Dorsolateral prefrontal cortex (tissue), 120 donors: ENCODE measurements at regions of chr4 and their contacts with region 1.

Region 1: GRCh38 chr4:140137671-140138070 is 16.3 kb downstream of the MAML3 start:
- DNase-seq: no peak
- H3K4me3 ChIP-seq: no peak overlapping the region
- H3K27ac ChIP-seq: no peak overlapping the region
- H3K27me3 ChIP-seq: no peaks in the 10 kb centered on the region
- CTCF ChIP-seq: no peak

Region 2: DNA sequence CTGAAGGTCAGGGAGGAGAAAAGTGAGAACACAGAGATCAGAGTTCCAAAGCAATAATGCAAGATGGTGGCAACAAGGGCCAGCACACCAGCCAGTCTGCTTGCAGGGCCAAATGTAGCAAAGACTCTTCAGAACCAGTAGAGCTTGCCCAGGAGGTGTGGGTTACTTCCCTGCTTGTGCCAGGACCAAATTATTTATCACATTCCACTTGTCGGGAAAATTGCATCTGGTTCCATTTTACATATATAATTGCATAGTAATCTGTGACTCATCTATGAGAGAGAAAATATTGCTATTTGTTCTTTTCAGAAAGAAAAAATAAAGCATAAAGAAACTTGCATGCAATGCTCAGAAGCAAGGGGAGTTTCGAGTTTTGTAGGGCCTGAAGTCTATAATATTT is 25.1 kb before region 1 on chr4:
- intact Hi-C with region 1: loop called in 1 of 2 experiments (anchors 2 kb)
- DNase-seq: no peak
- H3K4me3 ChIP-seq: no peak overlapping the region
- H3K27ac ChIP-seq: no peak overlapping the region
- H3K27me3 ChIP-seq: no peaks in the 10 kb centered on the region
- CTCF ChIP-seq: no peak

Region 3: GRCh38 chr4:140326395-140326993 is 188.8 kb after region 1 on chr4:
- intact Hi-C with region 1: no loop called
- DNase-seq: peak in 3 of 10 donors; percentile 27 to 66 (median 60)
- H3K4me3 ChIP-seq: no peak overlapping the region
- H3K27ac ChIP-seq: no peak overlapping the region
- H3K27me3 ChIP-seq: no peaks in the 10 kb centered on the region
- CTCF ChIP-seq: peak; percentile 7 to 90 (median 72)